Activated naive CD4-positive, alpha-beta T cell treated with anti-CD3 and anti-CD28 coated beads for 36 hours (primary cell): ENCODE measurements at regions of chr7 and their contacts with region 1.

Region 1: DNA sequence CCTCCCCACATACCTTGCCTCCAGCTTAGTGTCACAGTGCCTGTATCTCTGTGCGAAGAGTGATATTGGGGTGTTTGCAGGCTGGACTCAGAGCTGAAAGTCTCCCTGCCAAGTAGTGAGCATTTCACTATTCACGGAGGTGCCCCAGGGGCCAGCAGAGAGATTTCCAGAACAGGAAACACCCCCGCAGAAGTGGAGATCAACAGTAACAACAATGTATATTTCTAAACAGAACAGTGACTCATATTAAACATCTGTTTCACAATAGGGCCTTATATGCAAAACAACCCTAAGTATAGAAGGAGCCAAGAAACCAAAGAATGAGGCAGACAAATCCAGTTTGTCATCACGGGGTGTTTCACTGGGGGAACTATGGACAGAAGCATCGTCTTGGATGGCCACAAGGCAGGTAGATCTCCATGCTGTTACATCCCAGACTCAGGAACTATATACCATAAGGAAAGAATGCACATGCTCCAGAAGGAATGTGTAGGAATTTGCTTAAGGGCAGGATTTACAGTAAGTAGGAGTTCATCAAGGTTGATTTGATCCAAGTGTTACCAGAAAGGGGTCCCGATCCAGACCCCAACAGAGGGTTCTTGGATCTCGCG is 29.3 kb upstream of the CCL24 start:
- DNase-seq: peak; percentile 65
- H3K4me3 Mint-ChIP-seq: no peak overlapping the region
- H3K27ac Mint-ChIP-seq: peak overlapping the region; percentile 74
- H3K4me1 Mint-ChIP-seq: peaks cover 13% of the 10 kb centered on the region
- H3K27me3 Mint-ChIP-seq: no peaks in the 10 kb centered on the region

Region 2: DNA sequence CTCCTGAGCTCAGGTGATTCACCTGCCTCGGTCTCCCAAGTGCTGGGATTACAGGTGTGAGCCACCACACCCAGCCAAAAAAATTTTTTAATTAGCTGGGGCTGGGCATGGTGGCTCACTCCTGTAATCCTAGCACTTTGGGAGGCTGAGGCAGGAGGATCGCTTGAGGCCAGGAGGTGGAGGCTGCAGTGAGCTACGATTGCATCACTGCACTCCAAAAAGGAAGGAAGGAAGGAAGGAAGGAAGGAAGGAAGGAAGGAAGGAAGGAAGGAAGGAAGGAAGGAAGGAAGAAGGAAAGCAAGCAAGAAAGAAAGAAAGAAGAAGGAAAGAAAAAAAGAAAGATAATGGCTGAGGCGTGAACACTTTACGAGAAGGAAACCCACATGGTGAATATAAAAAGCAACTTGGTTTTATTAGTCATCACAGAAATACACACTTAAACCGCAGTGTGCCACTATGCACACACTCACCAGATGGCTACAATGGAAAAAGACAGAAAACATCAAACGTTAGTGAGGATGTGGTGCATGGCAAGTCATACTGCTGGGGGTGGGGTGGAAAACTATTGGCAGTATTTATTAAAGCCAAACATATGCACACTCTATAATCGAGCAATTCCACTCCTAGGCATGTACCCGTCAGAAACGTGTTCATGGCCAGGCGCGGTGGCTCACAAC is 66.5 kb before region 1 on chr7:
- CTCF ChIA-PET with region 1: no interaction called
- intact Hi-C with region 1: loop called (anchors 2 kb)
- DNase-seq: peak; percentile 81
- H3K4me3 Mint-ChIP-seq: no peak overlapping the region
- H3K27ac Mint-ChIP-seq: peak overlapping the region; percentile 81
- H3K4me1 Mint-ChIP-seq: peaks cover 32% of the 10 kb centered on the region
- H3K27me3 Mint-ChIP-seq: peaks cover 7% of the 10 kb centered on the region

Region 3: GRCh38 chr7:76133164-76133775 is 290.3 kb after region 1 on chr7:
- CTCF ChIA-PET with region 1: no interaction called
- intact Hi-C with region 1: no loop called
- DNase-seq: no peak
- H3K4me3 Mint-ChIP-seq: peak overlapping the region; percentile 17
- H3K27ac Mint-ChIP-seq: peak overlapping the region; percentile 4
- H3K4me1 Mint-ChIP-seq: peaks cover 19% of the 10 kb centered on the region
- H3K27me3 Mint-ChIP-seq: no peaks in the 10 kb centered on the region